ENCODE measurements at regions of chr2 and their contacts with region 1.

Region 1: GRCh38 chr2:26048791-26049190 is 14.9 kb downstream of the RAB10 start:
- DNase-seq: no peak
- ATAC-seq: 0 out of 2 replicates have a peak, but pooled peaks have one; percentile 46
- H3K4me3 ChIP-seq: no peak overlapping the region
- H3K27ac ChIP-seq: no peak overlapping the region
- H3K4me1 ChIP-seq: peaks cover 4% of the 10 kb centered on the region
- H3K27me3 ChIP-seq: no peaks in the 10 kb centered on the region
- CTCF ChIP-seq: no peak

Region 2: DNA sequence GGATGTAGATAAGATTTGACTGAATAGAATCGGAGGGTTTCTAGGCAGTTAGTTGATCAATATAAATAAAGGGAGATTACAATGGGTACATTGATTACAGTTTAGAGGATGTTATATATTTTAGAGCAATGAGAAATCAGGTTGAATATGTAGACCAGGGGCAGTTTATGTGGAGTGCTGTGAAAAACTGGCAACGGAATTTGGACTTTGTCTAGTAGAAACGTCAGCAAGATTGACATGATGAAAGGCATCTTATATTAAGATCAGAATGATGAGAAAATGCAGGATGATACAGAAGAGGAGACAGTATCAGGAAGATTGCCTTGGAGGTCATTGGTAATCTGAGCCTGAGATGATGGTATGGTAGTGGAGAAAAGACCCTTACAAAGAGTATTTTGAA is 25.0 kb after region 1 on chr2:
- CTCF ChIA-PET with region 1: interaction called, 14 read pairs
- POLR2A ChIA-PET with region 1: no interaction called
- in situ Hi-C with region 1: no loop called
- intact Hi-C with region 1: no loop called
- DNase-seq: no peak
- ATAC-seq: no peak
- H3K4me3 ChIP-seq: no peak overlapping the region
- H3K27ac ChIP-seq: no peak overlapping the region
- H3K4me1 ChIP-seq: peaks cover 20% of the 10 kb centered on the region
- H3K27me3 ChIP-seq: no peaks in the 10 kb centered on the region
- CTCF ChIP-seq: no peak

Region 3: DNA sequence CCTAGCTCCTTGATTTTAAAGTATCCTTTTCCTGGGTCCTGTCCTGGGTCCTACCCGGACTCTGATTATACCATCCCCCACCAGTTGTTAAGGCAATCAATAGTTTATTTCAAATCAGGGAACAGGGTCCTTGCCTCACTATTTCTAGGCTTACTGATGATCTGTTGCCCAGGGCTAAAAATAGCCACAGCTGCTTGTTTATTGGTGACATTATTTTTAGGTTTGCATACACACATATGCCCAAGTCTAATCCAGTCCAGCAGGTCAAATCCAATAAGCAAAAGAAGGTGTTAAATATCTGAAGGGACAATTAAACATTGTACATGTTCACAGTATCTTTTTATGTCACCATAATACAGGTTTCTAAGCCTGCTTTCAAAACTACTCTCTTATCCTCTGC is 51.1 kb after region 1 on chr2:
- CTCF ChIA-PET with region 1: no interaction called
- POLR2A ChIA-PET with region 1: no interaction called
- in situ Hi-C with region 1: no loop called
- intact Hi-C with region 1: no loop called
- DNase-seq: no peak
- ATAC-seq: no peak
- H3K4me3 ChIP-seq: no peak overlapping the region
- H3K27ac ChIP-seq: no peak overlapping the region
- H3K4me1 ChIP-seq: peaks cover 3% of the 10 kb centered on the region; the same call in 1 of the 2 replicates
- H3K27me3 ChIP-seq: no peaks in the 10 kb centered on the region
- CTCF ChIP-seq: no peak